Left ventricle myocardium inferior (tissue), 1 donor: ENCODE measurements at regions of chr14 and their contacts with region 1.

Region 1: GRCh38 chr14:35404449-35405303 is at the start of gene NFKBIA:
- DNase-seq: peak; percentile 94
- H3K4me3 ChIP-seq: peak within 1 kb of the TSS; percentile 89
- H3K27ac ChIP-seq: peak within 1 kb of the TSS; percentile 100
- H3K4me1 ChIP-seq: peaks cover 86% of the 10 kb centered on the region
- H3K27me3 ChIP-seq: no peaks in the 10 kb centered on the region
- CTCF ChIP-seq: peak; percentile 34
- total RNA-seq, gene NFKBIA: 78.0 TPM

Region 2: DNA sequence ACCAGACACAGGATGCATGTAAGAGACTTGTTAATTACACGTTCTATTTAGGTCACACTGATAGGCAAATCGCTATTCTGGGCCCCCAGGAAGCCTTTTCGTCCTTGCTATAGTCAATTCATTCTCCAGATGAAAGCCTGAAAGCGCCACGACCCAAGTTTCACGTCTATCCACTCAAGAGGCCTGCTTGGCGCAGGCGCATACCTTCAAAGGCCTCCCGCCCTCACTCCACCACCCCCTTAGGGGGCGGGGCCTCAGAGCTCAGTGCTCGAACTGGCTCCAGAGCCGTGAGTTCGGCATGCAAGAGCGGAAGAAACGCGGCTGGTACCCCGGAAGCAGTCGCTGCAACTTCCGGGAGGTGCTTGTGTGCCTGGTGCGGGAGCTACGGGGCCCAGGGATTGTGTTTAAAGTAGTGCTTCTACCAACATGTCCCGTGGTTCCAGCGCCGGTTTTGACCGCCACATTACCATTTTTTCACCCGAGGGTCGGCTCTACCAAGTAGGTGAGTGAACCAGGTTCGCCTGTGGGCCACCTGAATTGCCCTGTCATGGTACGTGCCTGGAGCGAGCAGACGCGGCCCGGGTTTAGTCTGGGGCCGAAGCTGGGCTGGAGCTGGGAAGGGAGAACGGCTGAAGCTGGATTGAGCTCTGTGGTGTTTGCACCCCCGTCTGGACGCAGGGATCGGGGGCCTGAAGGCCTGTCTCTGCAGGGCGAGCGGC is 112.5 kb before region 1 on chr14 and contains the start of gene PSMA6:
- intact Hi-C with region 1: loop called (anchors 5 kb)
- DNase-seq: peak; percentile 98
- H3K4me3 ChIP-seq: peak within 1 kb of the TSS; percentile 92
- H3K27ac ChIP-seq: peak within 1 kb of the TSS; percentile 94
- H3K4me1 ChIP-seq: peaks cover 67% of the 10 kb centered on the region
- H3K27me3 ChIP-seq: no peaks in the 10 kb centered on the region
- CTCF ChIP-seq: no peak
- total RNA-seq, gene PSMA6: 179 TPM

Region 3: DNA sequence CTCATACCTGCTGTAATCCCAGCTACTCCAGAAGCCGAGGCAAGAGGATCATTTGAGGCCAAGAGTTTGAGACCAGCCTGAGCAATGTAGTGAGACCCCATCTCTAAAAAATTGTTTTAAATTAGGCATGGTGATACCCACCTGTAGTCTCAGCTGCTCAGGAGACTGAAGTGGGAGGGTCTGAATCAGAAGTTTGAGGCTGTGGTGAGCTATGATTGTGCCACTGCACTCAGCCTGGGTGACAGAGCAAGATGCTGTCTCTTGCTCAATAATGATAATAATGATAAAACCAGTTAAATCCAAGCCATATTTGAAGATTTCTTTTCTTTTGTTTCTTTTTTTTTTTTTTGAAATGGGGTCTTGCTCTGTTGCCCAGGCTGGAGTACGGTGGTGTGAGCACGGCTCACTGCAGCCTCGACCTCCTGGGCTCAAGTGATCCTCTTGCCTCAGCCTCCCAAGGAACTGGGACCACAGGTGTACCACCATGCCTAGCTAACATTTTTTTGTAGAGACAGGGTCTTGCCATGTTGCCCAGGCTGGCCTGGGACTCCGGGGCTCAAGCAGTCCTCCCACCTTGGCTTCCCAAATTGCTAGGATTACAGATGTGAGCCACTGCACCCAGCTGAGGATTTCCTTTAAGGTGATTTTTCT is 99.7 kb before region 1 on chr14:
- intact Hi-C with region 1: no loop called
- DNase-seq: no peak
- H3K4me3 ChIP-seq: no peak overlapping the region
- H3K27ac ChIP-seq: peak overlapping the region; percentile 5
- H3K4me1 ChIP-seq: peaks cover 68% of the 10 kb centered on the region
- H3K27me3 ChIP-seq: no peaks in the 10 kb centered on the region
- CTCF ChIP-seq: no peak

Region 4: GRCh38 chr14:35336494-35337268 is 68.0 kb before region 1 on chr14:
- intact Hi-C with region 1: loop called (anchors 10 kb)
- DNase-seq: peak; percentile 93
- H3K4me3 ChIP-seq: peak overlapping the region; percentile 41
- H3K27ac ChIP-seq: peak overlapping the region; percentile 93
- H3K4me1 ChIP-seq: peaks cover 75% of the 10 kb centered on the region
- H3K27me3 ChIP-seq: no peaks in the 10 kb centered on the region
- CTCF ChIP-seq: no peak